Common myeloid progenitor, CD34-positive (primary cell): ENCODE measurements at regions of chr3 and their contacts with region 1.

Region 1: DNA sequence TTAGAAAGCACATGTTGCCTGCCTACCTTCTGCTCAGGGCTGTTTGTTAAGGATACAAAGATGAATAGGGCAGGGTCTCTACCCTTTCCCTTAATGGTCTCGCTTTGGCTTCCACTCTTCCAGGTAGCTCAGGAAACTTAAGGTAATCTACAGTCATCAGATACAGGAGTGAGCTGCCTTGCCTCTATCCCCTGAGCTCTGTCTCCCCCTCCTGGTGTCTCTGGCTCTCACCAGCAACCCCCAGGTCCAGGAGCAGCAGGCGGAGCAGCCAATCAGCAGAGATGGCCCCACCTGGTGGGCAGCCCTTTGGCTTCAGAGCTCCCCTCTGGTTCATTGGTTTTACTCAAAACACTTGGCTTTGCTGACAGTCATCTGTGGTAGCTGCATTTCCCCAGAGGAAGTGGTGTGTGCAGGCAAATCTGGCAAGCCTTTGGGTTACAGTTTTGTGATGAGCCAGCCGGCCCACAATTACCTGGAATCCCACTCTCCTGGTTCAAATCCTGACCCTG is 8.5 kb upstream of the CX3CR1 start:
- DNase-seq: peak; percentile 94 to 98 (median 98)
- H3K4me3 ChIP-seq: no peak overlapping the region
- H3K27ac ChIP-seq: no peak overlapping the region
- H3K4me1 ChIP-seq: peaks cover 0 to 16% (median 11%) of the 10 kb centered on the region in 4 experiments
- H3K27me3 ChIP-seq: no peaks in the 10 kb centered on the region

Region 2: DNA sequence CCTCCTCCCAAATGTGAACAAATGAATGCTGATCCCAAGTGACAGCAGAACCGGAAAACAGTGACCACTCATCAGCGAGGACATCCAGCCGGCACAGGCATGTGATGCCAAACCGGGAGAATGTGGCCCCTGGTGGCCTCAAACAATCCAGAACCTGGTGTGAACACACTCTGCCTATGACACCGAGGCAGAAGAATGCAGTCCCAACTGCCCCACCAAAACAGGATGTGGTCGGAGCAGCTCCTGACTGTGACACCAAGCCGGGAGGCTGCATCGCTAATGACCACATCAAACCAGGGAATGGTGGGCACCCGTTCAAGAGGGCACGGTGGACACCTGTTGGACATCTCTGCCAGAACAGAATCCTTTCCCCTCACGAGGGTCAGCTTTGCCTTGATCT is 654.2 kb before region 1 on chr3:
- CTCF ChIA-PET with region 1: no interaction called
- POLR2A ChIA-PET with region 1: no interaction called
- DNase-seq: no peak
- H3K4me3 ChIP-seq: no peak overlapping the region
- H3K27ac ChIP-seq: no peak overlapping the region
- H3K4me1 ChIP-seq: peaks cover 0 to 3% (median 0%) of the 10 kb centered on the region in 4 experiments
- H3K27me3 ChIP-seq: peaks cover 0 to 8% (median 5%) of the 10 kb centered on the region in 5 experiments

Region 3: GRCh38 chr3:38723569-38724394 is 564.6 kb before region 1 on chr3:
- CTCF ChIA-PET with region 1: no interaction called
- POLR2A ChIA-PET with region 1: no interaction called
- DNase-seq: peak; percentile 49 to 87 (median 79)
- H3K4me3 ChIP-seq: no peak overlapping the region
- H3K27ac ChIP-seq: no peak overlapping the region
- H3K4me1 ChIP-seq: peaks cover 0 to 30% (median 18%) of the 10 kb centered on the region in 4 experiments
- H3K27me3 ChIP-seq: no peaks in the 10 kb centered on the region

Region 4: DNA sequence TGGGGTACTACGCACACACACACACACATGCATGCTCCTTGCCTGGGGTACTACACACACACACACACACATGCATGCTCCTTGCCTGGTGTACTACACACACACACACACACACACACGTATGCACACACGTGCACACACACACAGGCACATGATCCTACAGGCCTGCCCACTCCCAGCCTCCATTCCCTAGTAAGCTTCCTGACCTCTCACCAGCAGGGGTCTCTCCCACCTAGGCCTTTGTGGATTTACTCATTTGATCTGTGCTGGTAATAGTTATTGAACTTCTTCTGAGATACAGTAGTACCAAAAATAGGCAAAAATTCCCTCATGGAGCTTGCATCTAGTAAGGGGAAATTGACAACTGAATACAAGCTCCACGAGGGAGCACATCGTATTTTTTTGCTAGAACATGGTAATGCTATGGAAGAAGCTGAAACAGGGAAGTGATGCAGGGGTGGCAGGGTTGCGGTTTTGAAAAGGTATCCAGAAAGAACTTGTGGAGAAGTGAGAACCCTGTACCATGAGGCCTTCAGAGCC is 161.8 kb before region 1 on chr3:
- CTCF ChIA-PET with region 1: interaction called, 122 read pairs
- POLR2A ChIA-PET with region 1: interaction called, 5 read pairs
- DNase-seq: peak; percentile 60 to 65 (median 64)
- H3K4me3 ChIP-seq: no peak overlapping the region
- H3K27ac ChIP-seq: no peak overlapping the region
- H3K4me1 ChIP-seq: peaks cover 13 to 40% (median 33%) of the 10 kb centered on the region in 4 experiments
- H3K27me3 ChIP-seq: no peaks in the 10 kb centered on the region

Region 5: DNA sequence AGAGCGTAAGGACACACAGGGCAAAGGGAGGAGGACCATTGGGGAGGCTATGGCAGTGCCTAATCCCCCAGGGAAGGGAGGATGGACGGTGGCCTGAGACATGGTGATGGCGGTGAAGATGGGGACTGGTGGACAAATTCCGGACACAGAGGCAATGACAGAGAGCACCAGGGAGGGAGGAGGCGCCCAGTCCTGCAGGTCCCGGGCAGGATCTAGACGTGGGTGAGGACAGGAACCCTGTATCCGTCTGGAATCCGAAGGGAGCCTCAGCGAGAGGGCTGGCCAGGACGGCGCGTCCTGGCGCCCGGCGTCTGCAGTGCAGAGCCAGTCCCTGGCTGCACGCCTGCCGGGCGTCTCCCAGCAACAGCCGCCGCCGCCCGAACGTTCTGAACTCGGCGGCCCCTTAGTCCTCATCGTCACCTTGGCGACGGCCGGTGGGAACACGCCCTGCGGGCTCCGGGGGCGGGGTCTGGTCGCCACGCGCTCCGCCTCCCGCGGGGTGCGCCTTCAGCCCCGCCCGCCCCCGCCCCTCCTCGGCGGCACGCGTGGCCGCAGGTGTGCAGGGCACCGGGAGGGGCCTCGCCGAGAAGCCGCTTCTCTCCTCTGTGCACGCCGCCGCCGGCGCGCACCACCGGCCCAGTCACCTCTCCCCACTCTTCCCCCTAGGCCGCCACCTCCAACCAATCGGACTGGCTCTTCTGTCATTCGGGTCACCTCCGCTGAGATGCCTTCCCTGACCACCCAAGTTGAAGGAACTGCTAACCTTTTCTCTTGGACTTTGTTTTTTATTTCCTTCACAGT is 107.6 kb before region 1 on chr3:
- CTCF ChIA-PET with region 1: interaction called, 618 read pairs
- POLR2A ChIA-PET with region 1: no interaction called
- DNase-seq: peak; percentile 83 to 92 (median 91)
- H3K4me3 ChIP-seq: peak overlapping the region; percentile 17 to 78 (median 62)
- H3K27ac ChIP-seq: no peak overlapping the region
- H3K4me1 ChIP-seq: peaks cover 18 to 38% (median 32%) of the 10 kb centered on the region in 4 experiments
- H3K27me3 ChIP-seq: no peaks in the 10 kb centered on the region

Region 6: DNA sequence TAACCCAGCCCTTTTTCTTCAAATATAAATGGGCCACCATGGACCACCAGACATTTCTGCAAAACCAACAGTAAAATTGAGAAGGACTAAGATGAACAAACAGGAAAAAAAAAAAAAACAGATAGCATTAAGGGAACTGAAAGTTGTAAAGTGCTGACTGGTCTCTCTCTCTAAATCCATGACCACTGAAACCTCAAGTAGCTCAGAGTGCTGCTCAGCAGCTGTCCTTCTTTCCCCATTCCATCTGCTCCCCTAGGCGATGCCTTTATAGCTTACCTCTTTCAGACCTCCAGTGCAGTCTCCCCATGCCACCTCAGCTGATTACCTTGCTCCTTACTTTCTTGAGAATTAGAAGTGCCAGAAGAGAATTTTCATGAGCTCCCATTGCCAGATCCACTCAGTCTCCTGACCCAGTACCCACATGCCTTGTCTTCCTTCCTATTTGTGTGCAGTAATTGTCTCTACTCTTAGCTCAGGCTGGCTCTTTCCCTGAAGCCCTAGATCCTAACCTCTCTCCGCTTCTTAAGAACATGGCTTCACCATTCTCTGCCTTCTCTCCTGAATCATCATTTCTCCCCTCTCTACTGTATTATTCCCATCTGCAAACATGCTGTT is 72.1 kb before region 1 on chr3:
- CTCF ChIA-PET with region 1: interaction called, 94 read pairs
- POLR2A ChIA-PET with region 1: no interaction called
- DNase-seq: peak; percentile 61 to 92 (median 87)
- H3K4me3 ChIP-seq: peak overlapping the region in 1 of 7 experiments; percentile 17
- H3K27ac ChIP-seq: no peak overlapping the region
- H3K4me1 ChIP-seq: peaks cover 14 to 51% (median 29%) of the 10 kb centered on the region in 4 experiments
- H3K27me3 ChIP-seq: no peaks in the 10 kb centered on the region

Region 7: DNA sequence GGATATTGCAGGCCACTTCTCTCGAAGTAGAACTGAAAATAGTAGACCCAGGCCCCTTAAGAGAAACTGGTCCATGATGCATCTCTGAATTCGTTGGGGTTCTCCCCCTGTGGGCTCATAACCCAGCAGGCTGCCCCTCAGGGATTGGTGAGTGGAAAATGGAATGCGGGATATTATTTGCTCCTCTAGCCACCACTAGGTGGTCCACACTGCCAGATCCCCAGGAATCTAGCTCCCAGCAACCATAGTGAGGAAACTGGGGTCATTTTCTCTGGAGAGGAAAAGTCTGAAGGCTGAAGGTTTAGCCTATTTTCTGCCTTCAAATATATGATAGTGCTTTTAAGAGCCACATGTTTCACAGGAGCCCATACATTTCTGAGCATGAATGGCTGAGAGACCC is 15.2 kb before region 1 on chr3:
- CTCF ChIA-PET with region 1: interaction called, 42 read pairs
- POLR2A ChIA-PET with region 1: no interaction called
- DNase-seq: no peak
- H3K4me3 ChIP-seq: no peak overlapping the region
- H3K27ac ChIP-seq: no peak overlapping the region
- H3K4me1 ChIP-seq: peaks cover 2 to 37% (median 13%) of the 10 kb centered on the region in 4 experiments
- H3K27me3 ChIP-seq: no peaks in the 10 kb centered on the region

Region 8: GRCh38 chr3:39378088-39378487 is 89.7 kb after region 1 on chr3:
- CTCF ChIA-PET with region 1: interaction called, 41 read pairs
- POLR2A ChIA-PET with region 1: no interaction called
- DNase-seq: peak in 2 of 3 donors; percentile 66 to 68
- H3K4me3 ChIP-seq: no peak overlapping the region
- H3K27ac ChIP-seq: no peak overlapping the region
- H3K4me1 ChIP-seq: peaks cover 0 to 21% (median 8%) of the 10 kb centered on the region in 4 experiments
- H3K27me3 ChIP-seq: no peaks in the 10 kb centered on the region